Common myeloid progenitor, CD34-positive (primary cell): ENCODE measurements at regions of chr7 and their contacts with region 1.

Region 1: GRCh38 chr7:6516387-6516983 is 34.8 kb downstream of the GRID2IP start:
- DNase-seq: peak; percentile 64 to 84 (median 75)
- H3K4me3 ChIP-seq: peak overlapping the region; percentile 45 to 78 (median 67)
- H3K27ac ChIP-seq: no peak overlapping the region
- H3K4me1 ChIP-seq: peaks cover 0 to 6% (median 3%) of the 10 kb centered on the region in 4 experiments
- H3K27me3 ChIP-seq: no peaks in the 10 kb centered on the region

Region 2: DNA sequence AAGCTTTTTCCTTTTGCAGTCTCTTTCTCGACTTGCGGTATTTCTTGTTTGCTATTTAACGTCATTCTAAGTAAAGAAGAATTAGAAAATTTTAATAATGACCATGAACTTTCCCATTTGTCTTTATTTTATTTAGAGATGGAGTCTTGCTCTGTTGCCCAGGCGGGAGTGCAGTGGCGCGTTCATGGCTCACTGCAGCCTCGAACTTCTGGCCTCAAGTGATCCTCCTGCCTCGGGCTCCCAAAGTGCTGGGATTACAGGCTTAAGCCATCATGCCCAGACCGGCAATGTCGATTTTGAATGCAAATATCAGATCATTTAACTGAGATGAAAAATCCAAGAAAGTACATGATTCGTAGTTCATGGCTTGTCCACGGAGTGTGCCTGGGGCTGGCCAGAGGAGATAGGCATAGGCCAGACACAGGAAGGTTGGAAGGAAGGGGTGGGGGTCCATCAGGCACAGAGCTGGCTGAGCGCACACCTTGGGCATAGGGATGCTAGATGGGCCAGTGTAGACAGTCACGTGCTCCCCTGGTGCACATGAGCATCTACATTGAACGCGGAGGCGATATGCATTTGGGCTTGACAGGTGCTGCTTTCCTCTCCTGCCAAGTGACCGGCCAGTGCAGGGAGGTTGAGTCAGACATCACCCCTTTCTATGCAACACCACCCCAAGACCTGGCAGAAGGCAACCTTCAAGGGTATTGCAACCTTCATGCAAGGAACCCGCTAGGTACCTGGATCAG is 29.9 kb before region 1 on chr7:
- CTCF ChIA-PET with region 1: no interaction called
- POLR2A ChIA-PET with region 1: no interaction called
- DNase-seq: no peak
- H3K4me3 ChIP-seq: no peak overlapping the region
- H3K27ac ChIP-seq: no peak overlapping the region
- H3K4me1 ChIP-seq: peaks cover 2 to 16% (median 12%) of the 10 kb centered on the region in 4 experiments
- H3K27me3 ChIP-seq: no peaks in the 10 kb centered on the region

Region 3: GRCh38 chr7:6505685-6506574 is 10.6 kb before region 1 on chr7:
- CTCF ChIA-PET with region 1: interaction called, 11 read pairs
- POLR2A ChIA-PET with region 1: no interaction called
- DNase-seq: no peak
- H3K4me3 ChIP-seq: no peak overlapping the region
- H3K27ac ChIP-seq: no peak overlapping the region
- H3K4me1 ChIP-seq: peaks cover 0 to 11% (median 8%) of the 10 kb centered on the region in 4 experiments
- H3K27me3 ChIP-seq: peaks cover 0 to 2% (median 0%) of the 10 kb centered on the region in 5 experiments

Region 4: GRCh38 chr7:6558837-6559236 is 42.4 kb after region 1 on chr7:
- CTCF ChIA-PET with region 1: interaction called, 28 read pairs
- POLR2A ChIA-PET with region 1: interaction called, 4 read pairs
- DNase-seq: peak; percentile 66 to 69 (median 66)
- H3K4me3 ChIP-seq: no peak overlapping the region
- H3K27ac ChIP-seq: no peak overlapping the region
- H3K4me1 ChIP-seq: no peaks in the 10 kb centered on the region
- H3K27me3 ChIP-seq: no peaks in the 10 kb centered on the region

Region 5: DNA sequence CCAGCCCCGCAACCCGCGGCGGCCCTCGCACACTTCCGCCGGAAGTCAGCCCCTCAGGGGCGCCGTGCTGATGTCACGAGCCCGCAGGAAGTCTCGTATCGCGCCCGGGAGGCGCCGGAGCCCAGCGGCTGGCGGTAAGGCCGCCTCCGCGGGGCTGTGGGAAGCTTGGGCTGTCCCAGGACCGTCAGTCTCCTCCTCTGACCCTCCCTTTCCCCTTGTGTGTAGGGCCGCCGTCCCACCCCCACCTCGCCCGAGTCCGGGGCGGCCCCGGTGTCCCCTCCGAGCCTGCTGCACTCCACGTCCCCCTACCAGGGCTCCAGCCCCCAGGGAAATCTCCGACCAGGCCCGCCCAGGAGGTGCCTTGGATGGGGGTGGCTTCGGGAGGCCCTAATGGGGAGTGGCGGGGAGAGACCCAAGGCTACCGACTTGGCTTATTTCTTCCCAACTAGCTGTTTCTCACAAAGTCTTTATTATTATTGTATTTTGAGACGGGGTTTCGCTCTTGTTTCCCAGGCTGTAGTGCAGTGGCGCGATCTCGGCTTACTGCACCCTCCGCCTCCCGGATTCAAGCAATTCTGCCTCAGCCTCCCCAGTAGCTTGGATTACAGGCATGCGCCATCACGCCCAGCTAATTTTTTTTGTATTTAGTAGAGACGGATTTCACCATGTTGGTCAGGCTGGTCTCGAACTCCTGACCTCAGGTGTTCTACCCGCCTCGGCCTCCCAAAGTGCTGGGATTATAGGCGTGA is 61.1 kb after region 1 on chr7 and contains the start of gene ZDHHC4:
- CTCF ChIA-PET with region 1: interaction called, 93 read pairs
- POLR2A ChIA-PET with region 1: interaction called, 4 read pairs
- DNase-seq: peak; percentile 95 to 97 (median 96)
- H3K4me3 ChIP-seq: peak within 1 kb of the TSS; percentile 43 to 88 (median 72)
- H3K27ac ChIP-seq: peak within 1 kb of the TSS; percentile 90 to 96
- H3K4me1 ChIP-seq: peaks cover 0 to 15% (median 13%) of the 10 kb centered on the region in 4 experiments
- H3K27me3 ChIP-seq: no peaks in the 10 kb centered on the region